Tibial artery (tissue), 4 donors: ENCODE measurements at regions of chr22 and their contacts with region 1.

Region 1: GRCh38 chr22:28810821-28811491 is 10.6 kb upstream of the XBP1 start:
- DNase-seq: peak in 1 of 2 donors; percentile 48
- H3K4me3 ChIP-seq: no peak overlapping the region
- H3K27ac ChIP-seq: no peak overlapping the region
- H3K4me1 ChIP-seq: peaks cover 0 to 16% (median 8%) of the 10 kb centered on the region in 4 donors
- H3K27me3 ChIP-seq: no peaks in the 10 kb centered on the region
- CTCF ChIP-seq: no peak

Region 2: GRCh38 chr22:28600546-28601143 is 210.3 kb before region 1 on chr22:
- intact Hi-C with region 1: no loop called
- DNase-seq: no peak
- H3K4me3 ChIP-seq: no peak overlapping the region
- H3K27ac ChIP-seq: no peak overlapping the region
- H3K4me1 ChIP-seq: no peaks in the 10 kb centered on the region
- H3K27me3 ChIP-seq: no peaks in the 10 kb centered on the region
- CTCF ChIP-seq: peak; percentile 44 to 68

Region 3: DNA sequence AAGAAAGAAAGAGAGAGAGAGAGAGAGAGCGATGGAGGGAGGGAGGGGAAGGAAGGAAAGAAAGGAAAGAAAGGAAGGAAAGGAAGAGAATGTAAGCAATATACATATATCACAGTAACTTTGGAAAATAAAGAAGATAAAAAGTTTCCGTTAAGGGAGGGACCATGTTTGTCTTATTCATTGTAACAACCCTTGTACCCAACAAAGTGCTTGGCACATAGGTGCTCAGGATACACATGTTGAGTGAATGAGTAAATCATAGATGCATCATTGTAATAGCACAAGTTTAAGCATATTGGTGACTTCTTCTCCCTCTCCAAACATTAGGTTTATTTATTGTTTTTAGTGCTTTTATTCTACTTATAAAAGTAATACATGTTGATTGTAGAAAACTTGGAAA is 32.7 kb after region 1 on chr22:
- intact Hi-C with region 1: loop called (anchors 2 kb)
- DNase-seq: no peak
- H3K4me3 ChIP-seq: no peak overlapping the region
- H3K27ac ChIP-seq: no peak overlapping the region
- H3K4me1 ChIP-seq: no peaks in the 10 kb centered on the region
- H3K27me3 ChIP-seq: no peaks in the 10 kb centered on the region
- CTCF ChIP-seq: no peak

Region 4: DNA sequence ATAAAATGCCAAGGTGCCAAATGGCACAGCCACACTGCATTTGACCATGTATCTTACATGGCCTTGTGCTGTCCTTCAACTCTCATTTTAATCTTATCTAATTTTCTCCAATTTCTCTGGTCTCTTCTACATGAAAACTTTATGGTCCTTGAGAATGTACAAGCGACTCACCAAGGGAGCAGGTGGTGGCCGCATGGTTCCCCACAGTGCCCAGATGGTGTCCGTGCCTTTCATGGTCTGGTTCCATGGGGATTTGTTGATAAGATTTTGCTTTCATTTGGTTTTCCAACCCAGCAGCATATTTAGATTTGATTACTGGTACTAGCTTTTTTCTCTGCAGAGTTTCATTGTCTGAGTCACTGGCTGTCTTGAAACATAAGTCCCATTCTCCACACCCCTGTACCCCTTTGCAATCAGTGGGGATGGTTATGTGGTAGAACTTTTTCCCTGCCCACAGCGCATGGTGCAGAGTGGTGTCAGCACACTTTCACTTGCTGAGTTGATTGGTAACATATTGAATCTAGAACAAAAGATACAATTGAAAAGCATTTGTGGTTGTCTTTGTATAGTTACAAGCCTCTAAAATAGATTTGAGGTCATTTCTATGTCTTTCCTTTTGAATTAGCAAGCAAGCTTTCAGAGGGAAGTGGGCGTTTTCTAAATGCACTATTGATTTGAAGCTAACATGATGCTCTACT is 96.5 kb after region 1 on chr22:
- intact Hi-C with region 1: no loop called
- DNase-seq: no peak
- H3K4me3 ChIP-seq: no peak overlapping the region
- H3K27ac ChIP-seq: no peak overlapping the region
- H3K4me1 ChIP-seq: peaks cover 0 to 89% (median 63%) of the 10 kb centered on the region in 4 donors
- H3K27me3 ChIP-seq: no peaks in the 10 kb centered on the region
- CTCF ChIP-seq: no peak